ENCODE measurements at regions of chr10 and their contacts with region 1.

Region 1: GRCh38 chr10:112140110-112140970 is 43.2 kb downstream of the GPAM start:
- DNase-seq: peak; percentile 67
- H3K4me3 ChIP-seq: no peak overlapping the region
- H3K27ac ChIP-seq: no peak overlapping the region
- H3K4me1 ChIP-seq: no peaks in the 10 kb centered on the region
- H3K27me3 ChIP-seq: no peaks in the 10 kb centered on the region
- CTCF ChIP-seq: peak; percentile 90 to 91
- POLR2A ChIP-seq: no peak

Region 2: DNA sequence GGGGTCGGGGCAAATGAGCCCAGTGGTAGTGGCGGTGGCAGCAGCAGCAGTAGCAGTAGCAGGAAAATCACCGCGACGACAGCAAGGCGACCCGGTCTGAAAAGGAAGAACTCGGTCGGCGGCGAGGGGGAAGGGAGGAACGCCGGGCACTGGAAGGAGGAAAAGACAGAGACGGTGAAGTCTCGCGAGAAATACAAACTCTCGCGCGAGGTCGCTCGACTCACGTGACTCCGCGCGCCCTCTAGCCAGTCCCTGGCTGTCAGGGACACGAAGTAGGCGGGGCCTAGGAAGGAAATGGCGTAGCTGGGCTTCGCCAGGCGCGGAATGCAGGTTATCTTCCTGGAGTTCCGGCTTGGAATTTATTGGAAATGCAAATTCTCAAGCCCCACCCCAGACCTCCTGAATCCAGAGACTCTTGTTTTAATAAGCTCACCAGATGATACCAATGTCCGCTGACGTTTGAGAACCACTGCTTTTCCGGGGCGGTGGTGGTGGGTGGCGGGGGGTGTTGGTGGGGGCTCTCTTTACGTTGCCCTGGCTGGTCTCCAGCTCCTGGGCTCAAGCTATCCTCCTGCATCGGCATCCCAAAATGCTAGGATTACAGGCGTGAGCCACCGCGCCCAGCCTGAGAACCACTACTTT is 1835.4 kb before region 1 on chr10 and contains the start of gene SMNDC1:
- CTCF ChIA-PET with region 1: interaction called, 17 read pairs
- POLR2A ChIA-PET with region 1: no interaction called
- dilution Hi-C with region 1: no loop called
- intact Hi-C with region 1: loop called (anchors 5 kb)
- DNase-seq: peak; percentile 99
- H3K4me3 ChIP-seq: peak within 1 kb of the TSS; percentile 95 to 99 (median 99)
- H3K27ac ChIP-seq: peak within 1 kb of the TSS; percentile 97
- H3K4me1 ChIP-seq: peaks cover 47% of the 10 kb centered on the region
- H3K27me3 ChIP-seq: no peaks in the 10 kb centered on the region
- CTCF ChIP-seq: no peak
- POLR2A ChIP-seq: peak; percentile 51
- total RNA-seq, gene SMNDC1: 38.5 and 39.3 TPM in 2 replicates

Region 3: GRCh38 chr10:110610308-110610774 is 1530.0 kb before region 1 on chr10:
- CTCF ChIA-PET with region 1: interaction called, 23 read pairs
- POLR2A ChIA-PET with region 1: no interaction called
- dilution Hi-C with region 1: no loop called
- intact Hi-C with region 1: loop called (anchors 5 kb)
- DNase-seq: peak; percentile 58
- H3K4me3 ChIP-seq: no peak overlapping the region
- H3K27ac ChIP-seq: no peak overlapping the region
- H3K4me1 ChIP-seq: no peaks in the 10 kb centered on the region
- H3K27me3 ChIP-seq: peaks cover 6 to 10% of the 10 kb centered on the region in 2 experiments
- CTCF ChIP-seq: peak; percentile 68 to 71
- POLR2A ChIP-seq: no peak

Region 4: DNA sequence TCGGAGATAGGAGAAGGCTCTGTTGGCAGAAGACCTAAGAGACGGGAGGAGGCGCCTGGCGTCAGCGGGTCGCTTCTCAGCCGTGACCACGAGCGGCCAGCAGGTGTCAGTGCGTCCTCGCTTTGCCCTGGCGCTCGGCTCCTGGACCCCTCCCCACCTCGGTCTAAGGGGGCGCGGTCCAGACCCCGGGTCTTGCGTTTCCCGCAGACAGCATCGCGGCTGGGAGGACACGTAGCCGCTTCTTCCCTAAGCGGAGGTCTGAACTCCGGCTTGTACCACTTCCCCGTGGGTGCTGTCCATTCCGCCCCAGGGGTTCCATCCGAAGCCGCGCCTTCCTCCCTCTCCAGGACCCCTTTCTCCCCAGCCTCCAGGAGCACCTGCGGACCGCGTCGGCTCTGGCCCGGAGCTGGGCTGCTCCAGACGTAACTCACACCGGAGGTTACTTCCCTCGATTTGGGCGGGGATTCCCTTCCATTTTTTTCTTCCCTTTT is 1064.1 kb before region 1 on chr10:
- CTCF ChIA-PET with region 1: interaction called, 36 read pairs
- POLR2A ChIA-PET with region 1: interaction called, 3 read pairs
- dilution Hi-C with region 1: no loop called
- intact Hi-C with region 1: loop called (anchors 1 kb)
- DNase-seq: peak; percentile 41
- H3K4me3 ChIP-seq: peak overlapping the region; percentile 23 to 50 (median 29)
- H3K27ac ChIP-seq: no peak overlapping the region
- H3K4me1 ChIP-seq: peaks cover 17% of the 10 kb centered on the region
- H3K27me3 ChIP-seq: peaks cover 40 to 71% of the 10 kb centered on the region in 2 experiments
- CTCF ChIP-seq: peak; percentile 68 to 92
- POLR2A ChIP-seq: no peak

Region 5: GRCh38 chr10:112122827-112123226 is 17.5 kb before region 1 on chr10:
- CTCF ChIA-PET with region 1: interaction called, 98 read pairs
- POLR2A ChIA-PET with region 1: no interaction called
- dilution Hi-C with region 1: no loop called
- intact Hi-C with region 1: no loop called
- DNase-seq: no peak
- H3K4me3 ChIP-seq: no peak overlapping the region
- H3K27ac ChIP-seq: no peak overlapping the region
- H3K4me1 ChIP-seq: no peaks in the 10 kb centered on the region
- H3K27me3 ChIP-seq: no peaks in the 10 kb centered on the region
- CTCF ChIP-seq: no peak
- POLR2A ChIP-seq: no peak

Region 6: DNA sequence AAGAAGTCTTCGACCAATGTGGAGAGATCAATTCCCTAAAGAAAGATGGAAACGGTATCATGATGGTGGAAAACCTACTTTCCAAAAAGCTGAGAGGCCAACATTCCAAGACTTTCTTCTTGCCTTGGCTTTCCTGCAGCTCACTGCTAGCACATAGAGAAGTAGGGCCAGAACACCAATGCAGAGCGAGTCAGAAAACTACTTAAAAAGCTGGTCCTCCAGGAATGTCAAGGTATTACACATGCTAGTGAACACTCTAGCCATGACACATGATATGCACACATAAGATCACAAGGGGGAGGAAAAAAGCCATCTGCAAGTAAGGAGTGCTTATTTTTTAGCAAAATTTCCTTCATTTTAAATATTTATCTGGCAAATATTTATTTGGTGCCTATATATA is 20.5 kb after region 1 on chr10:
- CTCF ChIA-PET with region 1: interaction called, 14 read pairs
- POLR2A ChIA-PET with region 1: no interaction called
- dilution Hi-C with region 1: no loop called
- intact Hi-C with region 1: no loop called
- DNase-seq: no peak
- H3K4me3 ChIP-seq: no peak overlapping the region
- H3K27ac ChIP-seq: no peak overlapping the region
- H3K4me1 ChIP-seq: no peaks in the 10 kb centered on the region
- H3K27me3 ChIP-seq: no peaks in the 10 kb centered on the region
- CTCF ChIP-seq: no peak
- POLR2A ChIP-seq: no peak

Region 7: DNA sequence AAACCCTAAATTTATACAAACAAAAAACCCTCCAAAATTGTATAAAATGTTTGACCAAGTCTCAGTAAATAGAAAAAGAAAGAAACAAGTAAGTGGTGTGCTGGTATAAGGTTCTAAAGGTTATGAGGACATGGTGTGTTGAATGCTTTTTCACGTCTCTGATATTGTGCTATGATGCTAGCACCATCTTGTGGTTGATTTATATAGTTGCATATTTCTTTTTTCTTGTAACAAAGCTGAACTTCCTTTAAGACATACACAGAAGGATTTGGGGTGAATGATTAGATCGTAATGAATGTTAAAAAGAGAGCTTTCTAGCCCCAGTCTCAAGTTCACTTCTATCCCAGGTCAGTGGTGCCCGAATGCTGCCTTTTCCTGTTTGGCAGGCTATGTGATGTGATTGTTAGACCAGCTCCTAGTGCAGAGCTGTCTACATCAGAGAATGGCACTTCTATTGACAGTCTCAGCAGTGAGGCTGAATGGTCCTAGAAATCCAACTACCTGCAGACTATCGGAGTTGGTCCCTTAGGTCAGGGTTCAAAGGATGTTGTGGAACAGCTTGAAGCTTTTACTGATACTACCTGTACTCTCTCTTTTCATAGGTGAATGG is 331.6 kb after region 1 on chr10:
- CTCF ChIA-PET with region 1: interaction called, 17 read pairs
- POLR2A ChIA-PET with region 1: no interaction called
- dilution Hi-C with region 1: no loop called
- intact Hi-C with region 1: loop called (anchors 1 kb)
- DNase-seq: peak; percentile 66
- H3K4me3 ChIP-seq: no peak overlapping the region
- H3K27ac ChIP-seq: no peak overlapping the region
- H3K4me1 ChIP-seq: no peaks in the 10 kb centered on the region
- H3K27me3 ChIP-seq: no peaks in the 10 kb centered on the region
- CTCF ChIP-seq: peak; percentile 44 to 45
- POLR2A ChIP-seq: no peak